G401 (cell line): ENCODE measurements at regions of chr4 and their contacts with region 1.

Region 1: GRCh38 chr4:157978680-157979361 is 194.0 kb downstream of the GASK1B start:
- DNase-seq: peak; percentile 84

Region 2: DNA sequence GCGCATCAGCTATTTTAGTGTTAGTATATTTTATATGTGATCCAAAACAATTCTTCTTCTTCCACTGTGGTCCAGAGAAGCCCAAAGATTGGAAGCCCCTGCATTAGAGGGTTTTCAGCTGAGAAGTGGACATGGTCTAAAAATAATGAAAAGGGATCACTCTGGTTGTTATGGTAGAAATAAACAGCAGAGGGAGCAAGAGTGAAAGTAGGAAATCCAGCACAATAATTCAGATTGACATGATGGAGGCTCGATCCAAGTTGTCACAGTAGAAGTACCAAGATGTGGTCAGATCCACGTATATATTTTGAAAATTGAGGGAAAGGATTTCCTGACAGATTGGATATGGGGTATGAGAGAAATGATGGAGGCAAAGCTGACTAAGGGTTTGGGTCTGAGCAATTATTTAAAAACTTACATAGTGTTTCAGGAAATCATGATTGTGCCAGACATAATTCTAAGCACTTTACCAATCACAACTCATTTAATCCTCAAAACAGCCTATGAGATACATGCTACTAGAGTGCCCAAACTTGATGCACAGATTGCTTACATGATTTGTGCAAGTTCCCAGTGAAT is 214.4 kb after region 1 on chr4:
- in situ Hi-C with region 1: loop called (anchors 25 kb)
- DNase-seq: peak; percentile 65